GM10248 (cell line): ENCODE measurements at regions of chr1 and their contacts with region 1.

Region 1: GRCh38 chr1:11037740-11038182 is 9.3 kb downstream of the MASP2 start:
- DNase-seq: peak; percentile 88
- CTCF ChIP-seq: peak; percentile 98

Region 2: GRCh38 chr1:10438677-10439163 is 599.0 kb before region 1 on chr1:
- CTCF ChIA-PET with region 1: no interaction called
- POLR2A ChIA-PET with region 1: interaction called, 13 read pairs
- DNase-seq: no peak
- CTCF ChIP-seq: no peak

Region 3: DNA sequence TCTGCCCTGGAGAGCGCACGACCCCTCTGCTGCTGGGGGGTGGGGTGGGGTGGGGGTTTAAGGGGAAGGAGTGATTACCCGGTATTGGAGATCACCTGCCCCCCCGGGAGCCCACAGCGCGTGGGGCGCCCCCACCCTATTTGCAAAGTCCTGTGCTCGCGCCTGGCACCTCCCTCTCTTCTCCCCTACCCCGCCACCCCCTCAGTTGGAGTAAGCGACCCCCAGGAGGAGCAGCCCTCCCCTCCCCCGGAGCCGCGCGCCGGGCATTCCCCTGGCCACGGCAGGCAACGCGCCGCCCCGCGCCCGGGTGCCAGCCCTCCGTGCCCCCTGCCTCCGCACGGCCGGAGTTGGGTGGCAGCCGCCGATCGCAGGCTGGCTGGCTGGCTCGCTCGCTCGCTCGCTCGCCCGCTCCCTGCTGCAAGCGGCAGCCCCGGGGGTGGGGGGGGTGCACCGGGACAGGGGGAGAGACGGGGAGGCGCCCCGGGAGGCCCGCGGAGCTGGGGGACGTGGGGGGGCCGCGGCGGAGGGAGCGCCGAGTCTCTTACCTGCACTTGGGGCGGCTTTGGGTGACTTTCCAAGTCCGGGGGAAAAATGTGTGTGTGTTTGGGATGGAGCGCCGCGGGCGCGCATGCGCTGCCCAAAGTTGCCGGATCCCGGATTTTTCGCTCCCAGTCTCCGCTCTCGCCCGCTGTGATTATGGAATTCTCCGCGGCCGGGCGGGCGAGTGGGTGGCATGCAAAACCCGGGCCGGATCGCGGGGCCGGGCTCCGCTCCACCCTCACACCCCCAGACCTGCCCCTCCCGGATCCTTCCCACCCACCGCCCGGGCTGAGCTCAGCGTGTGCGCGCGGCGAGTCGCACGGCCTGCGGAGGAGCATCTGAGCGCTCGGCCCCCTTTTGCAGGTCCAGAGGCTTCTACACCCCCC is 241.5 kb before region 1 on chr1 and contains the start of gene CASZ1:
- CTCF ChIA-PET with region 1: no interaction called
- POLR2A ChIA-PET with region 1: no interaction called
- DNase-seq: no peak
- CTCF ChIP-seq: no peak

Region 4: DNA sequence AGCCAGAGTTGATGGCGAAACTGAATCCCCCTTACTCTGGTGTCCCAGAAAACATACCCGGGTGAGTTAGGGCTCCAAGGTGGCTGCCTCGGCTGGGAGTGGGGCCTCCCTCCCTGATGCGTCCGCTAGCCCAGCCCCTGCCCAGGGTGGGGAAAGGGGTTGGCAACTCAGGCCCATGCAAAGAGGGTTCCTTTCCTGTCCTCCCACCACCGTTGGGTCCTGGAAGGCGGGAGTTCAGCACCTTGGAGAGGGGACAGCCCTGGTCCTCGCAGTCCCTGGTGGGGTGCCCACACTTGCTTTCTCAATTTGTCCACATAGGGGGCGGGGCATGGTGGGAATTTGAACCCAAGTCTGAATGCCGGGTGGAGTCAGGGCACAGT is 16.0 kb after region 1 on chr1:
- CTCF ChIA-PET with region 1: interaction called, 37 read pairs
- POLR2A ChIA-PET with region 1: no interaction called
- DNase-seq: no peak
- CTCF ChIP-seq: no peak

Region 5: DNA sequence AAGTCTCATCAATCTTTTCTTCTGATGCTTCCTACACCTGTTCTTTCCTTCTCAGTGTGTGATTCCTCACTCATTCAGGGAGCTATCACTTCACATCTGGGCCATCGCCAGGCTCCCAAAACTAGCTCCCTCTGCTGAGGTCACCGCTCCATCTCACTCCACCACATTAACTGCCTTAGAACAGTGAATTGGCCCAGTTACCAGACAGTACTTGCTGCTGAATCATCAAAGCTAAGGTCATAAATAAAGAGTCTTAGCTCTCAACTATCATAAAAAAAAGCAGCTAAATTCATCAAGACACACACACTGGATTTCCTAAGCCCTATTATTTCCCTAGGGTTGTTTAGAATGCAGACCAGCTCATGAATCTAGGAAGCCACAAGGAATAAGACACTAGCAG is 40.9 kb after region 1 on chr1:
- CTCF ChIA-PET with region 1: interaction called, 52 read pairs
- POLR2A ChIA-PET with region 1: no interaction called
- DNase-seq: no peak
- CTCF ChIP-seq: no peak

Region 6: DNA sequence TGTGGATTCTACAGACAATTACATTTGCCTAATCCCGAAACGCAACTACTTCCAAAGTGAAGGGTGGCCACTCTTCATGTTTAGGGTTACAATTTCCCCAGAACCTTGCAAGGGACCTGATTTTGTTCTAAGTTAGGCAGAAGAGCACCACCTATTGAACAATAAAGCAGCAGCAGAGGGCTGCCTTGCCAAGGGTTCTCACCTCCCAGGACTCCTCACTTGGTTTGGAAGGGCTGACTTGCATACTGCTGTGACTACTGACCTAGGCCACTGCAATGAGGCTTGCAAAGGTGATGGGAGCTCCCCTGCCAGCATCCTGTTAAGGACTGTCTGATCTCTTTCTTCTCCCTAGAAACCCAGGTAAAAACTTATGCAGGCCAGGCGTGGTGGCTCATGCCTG is 210.4 kb after region 1 on chr1:
- CTCF ChIA-PET with region 1: interaction called, 29 read pairs
- POLR2A ChIA-PET with region 1: no interaction called
- DNase-seq: no peak
- CTCF ChIP-seq: peak; percentile 16

Region 7: GRCh38 chr1:11634365-11635192 is 596.8 kb after region 1 on chr1:
- CTCF ChIA-PET with region 1: interaction called, 248 read pairs
- POLR2A ChIA-PET with region 1: no interaction called
- DNase-seq: no peak
- CTCF ChIP-seq: no peak

Region 8: DNA sequence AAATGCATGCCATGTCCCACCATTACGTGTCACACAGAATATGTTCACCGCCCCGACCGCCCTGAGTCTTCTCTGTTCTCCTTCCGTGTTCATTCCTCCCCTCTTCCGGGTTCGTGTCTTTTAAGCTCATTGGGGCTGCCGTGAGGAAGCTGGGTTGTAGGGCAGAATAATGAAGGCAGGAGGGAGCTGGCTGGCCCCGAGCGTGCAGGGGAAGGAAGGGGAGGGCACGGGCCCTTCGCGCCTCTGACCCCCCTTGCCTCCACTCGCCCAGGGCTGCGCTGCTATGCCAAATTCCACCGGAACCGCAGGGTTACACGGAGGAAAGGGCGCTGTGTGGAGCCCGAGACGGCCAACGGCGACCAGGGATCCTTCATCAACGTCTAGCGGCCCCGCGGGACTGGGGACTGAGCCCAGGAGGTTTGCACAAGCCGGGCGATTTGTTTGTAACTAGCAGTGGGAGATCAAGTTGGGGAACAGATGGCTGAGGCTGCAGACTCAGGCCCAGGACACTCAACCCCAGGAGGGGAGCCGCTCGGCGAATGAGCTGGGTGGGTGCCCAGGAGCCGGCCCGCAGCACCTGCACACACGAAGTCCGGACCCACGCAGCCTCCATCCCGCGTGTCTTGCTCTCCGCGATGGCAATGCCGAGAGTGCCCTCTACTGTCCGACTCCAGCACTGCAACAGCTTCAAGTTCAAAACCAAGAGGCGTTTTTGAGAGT is 681.7 kb after region 1 on chr1:
- CTCF ChIA-PET with region 1: interaction called, 26 read pairs
- POLR2A ChIA-PET with region 1: no interaction called
- DNase-seq: peak; percentile 80
- CTCF ChIP-seq: peak; percentile 97